ENCODE measurements at regions of chr17 and their contacts with region 1.

Region 1: DNA sequence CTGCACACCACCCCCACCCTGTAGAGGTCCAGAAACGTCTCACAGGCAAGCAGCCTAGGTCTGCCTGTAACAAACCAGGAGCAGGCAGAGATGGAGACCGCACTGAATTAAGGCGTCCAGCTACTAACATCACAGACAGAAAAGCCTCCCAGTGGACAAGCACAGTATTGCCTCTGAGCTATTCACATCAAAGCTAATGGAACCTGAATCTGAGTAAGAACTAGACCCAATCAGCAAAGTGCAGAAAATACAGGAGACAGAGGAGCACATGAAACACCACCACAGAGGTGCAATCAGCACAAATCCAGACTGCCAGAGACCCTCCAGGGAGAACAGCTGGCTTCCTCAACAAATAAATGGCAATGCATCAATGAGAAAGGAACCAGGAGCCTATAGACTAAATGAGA is 22.2 kb upstream of the PEMT start:
- DNase-seq: peak; percentile 78 to 80
- H3K4me3 ChIP-seq: no peak overlapping the region
- H3K4me3 Mint-ChIP-seq: no peak overlapping the region
- H3K27ac Mint-ChIP-seq: no peak overlapping the region
- H3K4me1 ChIP-seq: no peaks in the 10 kb centered on the region
- H3K4me1 Mint-ChIP-seq: no peaks in the 10 kb centered on the region
- H3K27me3 ChIP-seq: no peaks in the 10 kb centered on the region
- H3K27me3 Mint-ChIP-seq: no peaks in the 10 kb centered on the region
- CTCF ChIP-seq: peak; percentile 55 to 86

Region 2: DNA sequence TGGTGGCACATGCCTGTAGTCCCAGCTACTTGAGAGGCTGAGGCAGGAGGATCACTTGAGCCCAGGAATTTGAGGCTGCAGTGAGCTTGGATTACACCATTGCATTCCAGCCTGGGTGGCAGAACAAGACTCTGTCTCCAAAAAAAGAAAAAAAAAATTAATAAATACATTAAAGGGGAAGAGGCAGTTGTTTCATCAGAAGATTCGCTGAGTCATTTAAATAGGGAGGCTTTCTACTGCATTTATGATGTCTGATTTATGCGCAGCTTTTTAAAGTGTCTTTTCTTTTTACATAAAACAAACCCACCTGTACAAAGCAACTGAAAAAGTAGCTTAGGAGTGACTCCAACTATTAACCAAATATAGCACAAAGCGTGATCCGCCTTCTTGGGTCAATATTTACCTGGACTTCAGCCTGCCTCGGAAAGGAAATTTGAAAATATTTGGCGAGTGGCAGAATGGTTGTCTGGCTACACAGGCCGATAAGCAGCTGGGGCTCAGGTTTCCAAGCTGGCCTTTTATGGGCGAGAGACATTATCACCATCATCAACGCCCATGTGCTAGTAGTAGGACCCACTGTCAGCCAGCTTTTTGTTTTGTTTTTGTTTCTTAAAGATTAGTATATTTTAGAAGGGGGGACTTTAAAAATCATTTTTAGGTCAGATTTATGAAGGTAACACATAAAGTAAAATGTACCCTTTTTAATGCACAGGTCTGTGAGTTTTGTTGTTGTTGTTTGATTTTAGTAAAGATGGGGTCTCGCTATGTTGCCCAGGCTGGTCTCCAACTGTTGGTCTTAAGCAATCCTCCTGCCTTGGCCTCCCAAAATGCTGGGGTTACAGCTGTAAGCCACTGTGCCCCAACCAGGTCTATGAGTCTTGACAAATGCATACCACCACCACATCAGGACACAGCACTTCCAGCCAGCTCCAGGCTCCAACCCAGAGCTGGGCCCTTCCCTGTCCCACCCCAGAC is 75.0 kb before region 1 on chr17:
- CTCF ChIA-PET with region 1: interaction called, 11 read pairs
- POLR2A ChIA-PET with region 1: no interaction called
- intact Hi-C with region 1: no loop called
- DNase-seq: peak; percentile 92
- H3K4me3 ChIP-seq: no peak overlapping the region
- H3K4me3 Mint-ChIP-seq: peak overlapping the region; percentile 27
- H3K27ac Mint-ChIP-seq: peak overlapping the region; percentile 90
- H3K4me1 ChIP-seq: peaks cover 42% of the 10 kb centered on the region
- H3K4me1 Mint-ChIP-seq: peaks cover 19% of the 10 kb centered on the region
- H3K27me3 ChIP-seq: no peaks in the 10 kb centered on the region
- H3K27me3 Mint-ChIP-seq: no peaks in the 10 kb centered on the region
- CTCF ChIP-seq: no peak

Region 3: GRCh38 chr17:17568749-17569195 is 44.9 kb before region 1 on chr17:
- CTCF ChIA-PET with region 1: interaction called, 5 read pairs
- POLR2A ChIA-PET with region 1: no interaction called
- intact Hi-C with region 1: loop called (anchors 5 kb)
- DNase-seq: peak; percentile 85 to 92
- H3K4me3 ChIP-seq: no peak overlapping the region
- H3K4me3 Mint-ChIP-seq: no peak overlapping the region
- H3K27ac Mint-ChIP-seq: peak overlapping the region; percentile 76
- H3K4me1 ChIP-seq: peaks cover 17% of the 10 kb centered on the region
- H3K4me1 Mint-ChIP-seq: peaks cover 12% of the 10 kb centered on the region
- H3K27me3 ChIP-seq: no peaks in the 10 kb centered on the region
- H3K27me3 Mint-ChIP-seq: no peaks in the 10 kb centered on the region
- CTCF ChIP-seq: peak; percentile 93 to 95

Region 4: GRCh38 chr17:17591355-17592298 is 22.1 kb before region 1 on chr17 and contains the start of gene PEMT:
- CTCF ChIA-PET with region 1: interaction called, 17 read pairs
- POLR2A ChIA-PET with region 1: interaction called, 5 read pairs
- intact Hi-C with region 1: loop called (anchors 2 kb)
- DNase-seq: peak; percentile 96 to 99
- H3K4me3 ChIP-seq: peak within 1 kb of the TSS; percentile 51
- H3K4me3 Mint-ChIP-seq: peak within 1 kb of the TSS; percentile 94
- H3K27ac Mint-ChIP-seq: peak within 1 kb of the TSS; percentile 85
- H3K4me1 ChIP-seq: peaks cover 14% of the 10 kb centered on the region
- H3K4me1 Mint-ChIP-seq: peaks cover 19% of the 10 kb centered on the region
- H3K27me3 ChIP-seq: no peaks in the 10 kb centered on the region
- H3K27me3 Mint-ChIP-seq: no peaks in the 10 kb centered on the region
- CTCF ChIP-seq: no peak
- total RNA-seq, gene PEMT: 29.5 and 32.1 TPM in 2 replicates

Region 5: GRCh38 chr17:17624741-17625140 is 11.0 kb after region 1 on chr17:
- CTCF ChIA-PET with region 1: interaction called, 13 read pairs
- POLR2A ChIA-PET with region 1: no interaction called
- intact Hi-C with region 1: no loop called
- DNase-seq: no peak
- H3K4me3 ChIP-seq: no peak overlapping the region
- H3K4me3 Mint-ChIP-seq: no peak overlapping the region
- H3K27ac Mint-ChIP-seq: no peak overlapping the region
- H3K4me1 ChIP-seq: no peaks in the 10 kb centered on the region
- H3K4me1 Mint-ChIP-seq: peaks cover 6% of the 10 kb centered on the region
- H3K27me3 ChIP-seq: no peaks in the 10 kb centered on the region
- H3K27me3 Mint-ChIP-seq: no peaks in the 10 kb centered on the region
- CTCF ChIP-seq: no peak

Region 6: GRCh38 chr17:17723354-17724261 is 109.9 kb after region 1 on chr17:
- CTCF ChIA-PET with region 1: no interaction called
- POLR2A ChIA-PET with region 1: no interaction called
- intact Hi-C with region 1: no loop called
- DNase-seq: no peak
- H3K4me3 ChIP-seq: no peak overlapping the region
- H3K4me3 Mint-ChIP-seq: peak overlapping the region; percentile 64
- H3K27ac Mint-ChIP-seq: peak overlapping the region; percentile 15
- H3K4me1 ChIP-seq: no peaks in the 10 kb centered on the region; the same call in 1 of the 2 replicates
- H3K4me1 Mint-ChIP-seq: peaks cover 14% of the 10 kb centered on the region
- H3K27me3 ChIP-seq: no peaks in the 10 kb centered on the region
- H3K27me3 Mint-ChIP-seq: no peaks in the 10 kb centered on the region
- CTCF ChIP-seq: no peak

Measured in Caco-2 (cell line).